Thyroid gland (tissue), 4 donors: ENCODE measurements at regions of chr7 and their contacts with region 1.

Region 1: DNA sequence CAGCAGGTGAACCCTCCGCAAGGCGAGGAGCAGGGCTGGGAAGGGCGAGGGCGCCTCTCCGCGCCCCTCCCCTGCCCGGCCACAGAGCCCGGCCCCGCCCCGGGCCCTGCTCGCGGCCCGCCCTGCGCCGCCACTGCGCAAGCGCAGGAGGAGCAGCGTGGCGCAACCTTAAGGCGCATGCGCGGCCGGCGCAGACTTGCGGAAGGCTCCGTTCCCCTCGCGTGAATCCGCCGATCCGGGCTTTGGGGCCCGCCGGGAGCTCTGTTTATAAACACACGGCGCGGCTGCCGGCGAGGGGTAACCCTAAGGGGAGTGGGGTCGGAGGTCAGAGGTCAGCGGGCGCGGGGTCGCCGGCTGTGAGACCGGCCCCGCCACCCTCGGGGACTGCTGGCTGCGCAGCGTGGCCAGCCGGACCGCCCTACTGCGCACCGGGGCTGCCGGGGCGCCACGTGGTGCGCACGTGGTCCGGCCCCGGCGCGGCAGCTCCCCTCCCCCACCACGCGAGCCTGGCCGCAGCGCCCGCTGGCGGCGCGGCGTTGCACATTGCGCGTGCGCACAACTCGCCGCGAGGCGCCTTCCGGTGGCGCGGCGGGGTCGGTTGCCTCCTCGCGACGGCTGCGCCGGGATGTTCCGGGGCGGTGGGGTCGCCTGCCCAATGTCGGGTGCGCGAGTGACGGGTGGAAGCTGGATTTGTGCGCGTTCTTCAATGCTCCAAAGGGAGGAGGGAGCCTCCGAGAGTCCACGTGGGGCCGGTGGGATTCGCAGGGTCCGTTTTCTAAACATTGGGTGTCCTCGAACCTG is 40.2 kb upstream of the FOXK1 start:
- DNase-seq: peak; percentile 92 to 95
- H3K4me3 ChIP-seq: peak overlapping the region in 2 of 3 donors; percentile 37 to 47
- H3K27ac ChIP-seq: peak overlapping the region; percentile 50 to 92 (median 79)
- H3K4me1 ChIP-seq: peaks cover 4 to 5% of the 10 kb centered on the region in 2 donors
- H3K27me3 ChIP-seq: no peaks in the 10 kb centered on the region
- CTCF ChIP-seq: peak in 3 of 6 experiments; percentile 57 to 59 (median 59)
- POLR2A ChIP-seq: peak in 1 of 2 donors; percentile 56

Region 2: GRCh38 chr7:4675771-4676367 is 34.0 kb after region 1 on chr7:
- intact Hi-C with region 1: loop called (anchors 5 kb)
- DNase-seq: no peak
- H3K4me3 ChIP-seq: no peak overlapping the region
- H3K27ac ChIP-seq: no peak overlapping the region
- H3K4me1 ChIP-seq: no peaks in the 10 kb centered on the region
- H3K27me3 ChIP-seq: no peaks in the 10 kb centered on the region
- CTCF ChIP-seq: no peak
- POLR2A ChIP-seq: no peak

Region 3: DNA sequence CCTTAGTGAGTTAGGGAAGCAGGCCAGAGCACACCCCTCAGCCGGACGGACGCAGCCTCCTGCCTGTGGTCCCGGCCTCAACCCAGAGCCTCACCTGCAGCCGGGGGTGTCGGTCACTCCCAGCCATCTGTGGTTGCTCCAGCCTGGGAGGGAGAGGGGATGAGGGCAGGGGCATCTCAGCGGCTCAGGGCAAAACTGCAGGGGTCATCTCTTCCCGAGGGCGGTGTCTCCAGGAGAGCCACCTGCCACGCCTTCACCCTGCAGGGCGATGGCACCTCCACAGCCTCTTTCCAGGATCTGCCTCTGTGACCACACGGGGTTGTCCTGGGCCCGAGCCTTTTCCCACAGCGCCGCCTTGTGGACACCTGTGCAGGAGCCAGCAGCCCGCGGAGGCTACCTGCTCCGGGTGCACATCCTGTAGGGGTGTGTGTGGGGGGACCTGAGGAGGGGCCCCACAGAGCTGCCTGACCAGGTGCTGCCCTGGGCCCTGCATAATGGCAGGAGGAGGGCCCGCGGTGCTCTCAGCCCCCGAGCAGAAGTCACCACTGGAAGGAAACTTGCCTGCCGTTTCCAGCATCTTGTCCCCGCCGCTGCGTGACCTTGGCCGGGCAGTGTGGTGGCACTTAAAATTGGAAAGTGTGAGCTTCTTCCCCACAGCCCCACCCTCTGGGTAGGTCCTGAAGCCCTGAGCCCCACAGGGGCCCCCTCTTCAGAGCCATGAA is 112.0 kb after region 1 on chr7:
- intact Hi-C with region 1: loop called (anchors 5 kb)
- DNase-seq: peak; percentile 75 to 83
- H3K4me3 ChIP-seq: no peak overlapping the region
- H3K27ac ChIP-seq: no peak overlapping the region
- H3K4me1 ChIP-seq: peaks cover 0 to 6% of the 10 kb centered on the region in 2 donors
- H3K27me3 ChIP-seq: no peaks in the 10 kb centered on the region
- CTCF ChIP-seq: peak; percentile 67 to 93 (median 87)
- POLR2A ChIP-seq: no peak